Endothelial cell of umbilical vein (primary cell): ENCODE measurements at regions of chr3 and their contacts with region 1.

Region 1: DNA sequence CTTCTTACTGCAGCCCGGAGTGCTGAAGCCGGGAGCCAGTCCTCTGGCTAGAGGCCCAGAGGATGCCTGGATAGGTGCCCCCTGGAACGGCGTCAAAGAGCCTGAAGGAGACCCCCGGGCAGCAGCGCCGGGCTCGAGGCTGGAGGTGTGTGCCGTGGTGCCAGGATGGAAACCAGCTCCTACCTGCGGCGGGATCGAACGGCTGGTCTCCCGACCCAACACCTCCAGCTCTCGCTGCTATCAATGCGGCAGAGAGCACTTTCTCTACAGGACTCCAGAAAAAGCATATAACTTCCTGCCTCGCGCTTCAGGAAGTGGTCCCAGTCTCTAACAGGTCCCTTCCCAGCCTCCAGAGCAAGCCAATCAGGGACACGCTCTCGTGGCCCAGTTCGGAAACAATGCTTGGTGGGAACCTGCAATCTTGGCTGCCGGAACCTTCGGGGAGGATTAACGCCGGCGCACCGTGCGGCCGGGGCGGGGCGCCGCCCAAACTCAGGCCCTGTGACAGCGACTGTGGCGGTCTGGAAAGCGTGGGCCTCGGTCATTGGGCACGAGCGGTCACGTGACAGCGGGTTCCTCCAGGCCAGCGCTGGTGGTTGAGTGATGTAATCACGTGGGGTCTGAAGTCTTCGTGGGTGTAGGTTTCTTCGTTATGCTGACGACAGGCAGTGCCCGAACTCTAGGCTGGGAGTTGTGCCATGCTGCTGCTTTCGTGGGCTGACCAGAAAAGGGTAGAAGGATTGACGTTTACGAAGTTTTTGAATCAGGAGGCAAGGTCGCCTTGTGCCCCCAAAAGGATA is at the start of gene SLC33A1:
- DNase-seq: peak; percentile 100
- H3K4me3 ChIP-seq: peak within 1 kb of the TSS; percentile 56 to 96 (median 75)
- H3K27ac ChIP-seq: peak within 1 kb of the TSS; percentile 56
- H3K4me1 ChIP-seq: peaks cover 7% of the 10 kb centered on the region
- H3K27me3 ChIP-seq: no peaks in the 10 kb centered on the region
- CTCF ChIP-seq: no peak
- POLR2A ChIP-seq: peak; percentile 79
- total RNA-seq, gene SLC33A1: 30.1 and 30.3 TPM in 2 replicates

Region 2: GRCh38 chr3:155382396-155383042 is 471.8 kb before region 1 on chr3:
- CTCF ChIA-PET with region 1: no interaction called
- POLR2A ChIA-PET with region 1: no interaction called
- dilution Hi-C with region 1: no loop called
- intact Hi-C with region 1: loop called (anchors 1 kb)
- DNase-seq: peak; percentile 50
- H3K4me3 ChIP-seq: no peak overlapping the region
- H3K27ac ChIP-seq: no peak overlapping the region
- H3K4me1 ChIP-seq: no peaks in the 10 kb centered on the region
- H3K27me3 ChIP-seq: no peaks in the 10 kb centered on the region
- CTCF ChIP-seq: peak; percentile 61 to 69
- POLR2A ChIP-seq: no peak

Region 3: GRCh38 chr3:155744626-155745324 is 109.6 kb before region 1 on chr3 and contains the start of gene PLCH1:
- CTCF ChIA-PET with region 1: no interaction called
- POLR2A ChIA-PET with region 1: no interaction called
- dilution Hi-C with region 1: no loop called
- intact Hi-C with region 1: loop called (anchors 5 kb)
- DNase-seq: peak; percentile 52
- H3K4me3 ChIP-seq: peak within 1 kb of the TSS; percentile 34 to 64 (median 42)
- H3K27ac ChIP-seq: no peak within 1 kb of the TSS
- H3K4me1 ChIP-seq: peaks cover 7% of the 10 kb centered on the region
- H3K27me3 ChIP-seq: peaks cover 27 to 45% of the 10 kb centered on the region in 2 experiments
- CTCF ChIP-seq: no peak
- POLR2A ChIP-seq: no peak
- total RNA-seq, gene PLCH1: not detected in 2 replicates

Region 4: DNA sequence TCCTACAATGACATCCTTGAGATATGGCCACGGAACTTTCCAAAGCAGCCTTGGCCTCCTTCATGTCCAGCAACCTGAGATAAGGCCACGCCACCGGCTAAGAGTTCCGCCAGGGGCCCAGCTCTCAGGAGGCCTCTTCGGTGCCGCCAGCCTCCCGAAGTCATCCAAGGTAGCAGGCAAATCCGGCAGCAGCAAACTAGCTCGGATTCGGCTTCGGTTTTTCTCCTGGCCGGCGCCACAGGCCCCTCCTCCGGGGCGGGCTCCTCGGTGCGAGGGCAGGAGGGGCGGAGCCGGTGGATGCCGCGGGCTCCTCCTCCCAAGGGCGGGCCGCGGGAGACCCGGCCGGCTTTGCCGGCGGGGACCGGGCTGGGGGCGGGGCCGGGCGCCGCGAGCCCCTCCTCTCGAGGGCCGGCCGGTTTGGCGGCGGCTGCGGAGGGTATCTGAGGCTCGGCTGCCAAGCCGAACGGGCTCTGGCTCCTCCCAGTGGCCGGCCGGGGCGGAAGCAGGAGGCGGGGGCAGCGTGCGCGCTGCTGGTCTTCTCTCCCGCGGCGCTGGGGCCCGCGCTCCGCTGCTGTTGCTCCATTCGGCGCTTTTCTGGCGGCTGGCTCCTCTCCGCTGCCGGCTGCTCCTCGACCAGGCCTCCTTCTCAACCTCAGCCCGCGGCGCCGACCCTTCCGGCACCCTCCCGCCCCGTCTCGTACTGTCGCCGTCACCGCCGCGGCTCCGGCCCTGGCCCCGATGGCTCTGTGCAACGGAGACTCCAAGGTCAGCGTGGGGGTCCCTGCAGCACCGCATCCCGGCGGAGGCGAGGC is 16.0 kb after region 1 on chr3 and contains the start of gene GMPS:
- CTCF ChIA-PET with region 1: interaction called, 5 read pairs
- POLR2A ChIA-PET with region 1: interaction called, 4 read pairs
- dilution Hi-C with region 1: no loop called
- intact Hi-C with region 1: loop called (anchors 1 kb)
- DNase-seq: peak; percentile 96
- H3K4me3 ChIP-seq: peak within 1 kb of the TSS; percentile 93 to 98 (median 96)
- H3K27ac ChIP-seq: peak within 1 kb of the TSS; percentile 79
- H3K4me1 ChIP-seq: peaks cover 20% of the 10 kb centered on the region
- H3K27me3 ChIP-seq: no peaks in the 10 kb centered on the region
- CTCF ChIP-seq: peak; percentile 8 to 33
- POLR2A ChIP-seq: peak; percentile 59
- total RNA-seq, gene GMPS: 66.0 and 67.5 TPM in 2 replicates

Region 5: DNA sequence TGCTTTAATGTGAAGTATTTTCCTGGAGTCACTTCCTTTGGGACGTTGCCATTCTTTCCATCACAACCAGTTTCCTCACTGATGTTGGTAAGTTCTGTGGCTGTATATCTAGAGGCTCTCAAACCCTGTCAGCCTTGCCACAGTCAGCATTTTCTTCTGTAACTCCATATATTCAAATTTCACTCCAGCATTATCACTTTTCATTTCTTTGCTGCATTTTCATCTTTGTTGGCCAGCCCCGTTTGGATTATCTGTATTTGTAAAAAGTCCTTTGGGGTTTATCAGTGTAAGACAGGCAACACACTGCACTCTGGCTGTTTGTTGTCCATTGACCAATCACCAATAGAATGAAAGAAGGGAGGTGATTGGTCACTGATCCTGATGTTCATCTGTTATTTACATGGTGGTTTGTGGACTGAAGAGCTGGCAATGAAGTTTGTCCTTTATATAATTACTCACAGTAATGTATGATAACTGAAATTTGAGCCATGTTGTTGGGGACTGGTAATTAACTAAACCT is 36.4 kb after region 1 on chr3:
- CTCF ChIA-PET with region 1: no interaction called
- POLR2A ChIA-PET with region 1: no interaction called
- dilution Hi-C with region 1: no loop called
- intact Hi-C with region 1: loop called (anchors 2 kb)
- DNase-seq: peak; percentile 85
- H3K4me3 ChIP-seq: no peak overlapping the region
- H3K27ac ChIP-seq: peak overlapping the region; percentile 12
- H3K4me1 ChIP-seq: peaks cover 13% of the 10 kb centered on the region
- H3K27me3 ChIP-seq: no peaks in the 10 kb centered on the region
- CTCF ChIP-seq: no peak
- POLR2A ChIP-seq: no peak

Region 6: GRCh38 chr3:156547637-156548036 is 693.3 kb after region 1 on chr3:
- CTCF ChIA-PET with region 1: no interaction called
- POLR2A ChIA-PET with region 1: no interaction called
- dilution Hi-C with region 1: no loop called
- intact Hi-C with region 1: loop called (anchors 5 kb)
- DNase-seq: peak; percentile 51
- H3K4me3 ChIP-seq: no peak overlapping the region
- H3K27ac ChIP-seq: peak overlapping the region; percentile 42
- H3K4me1 ChIP-seq: peaks cover 93% of the 10 kb centered on the region
- H3K27me3 ChIP-seq: no peaks in the 10 kb centered on the region
- CTCF ChIP-seq: no peak
- POLR2A ChIP-seq: no peak